ENCODE measurements at regions of chr11 and their contacts with region 1.

Region 1: GRCh38 chr11:74948898-74949747 is at the starts of genes SPCS2 and XRRA1:
- DNase-seq: peak; percentile 98 to 99 (median 99)
- H3K4me3 ChIP-seq: peak within 1 kb of the TSS; percentile 62 to 99 (median 92)
- H3K27ac ChIP-seq: peak within 1 kb of the TSS in 57 of 59 donors; percentile 23 to 91 (median 80)
- H3K27me3 ChIP-seq: no peaks in the 10 kb centered on the region
- CTCF ChIP-seq: peak in 36 of 56 donors; percentile 0 to 59 (median 30)
- total RNA-seq, gene SPCS2: 91.9 to 159 (median 120) TPM
- total RNA-seq, gene XRRA1: 11.0 to 66.2 (median 28.2) TPM

Region 2: DNA sequence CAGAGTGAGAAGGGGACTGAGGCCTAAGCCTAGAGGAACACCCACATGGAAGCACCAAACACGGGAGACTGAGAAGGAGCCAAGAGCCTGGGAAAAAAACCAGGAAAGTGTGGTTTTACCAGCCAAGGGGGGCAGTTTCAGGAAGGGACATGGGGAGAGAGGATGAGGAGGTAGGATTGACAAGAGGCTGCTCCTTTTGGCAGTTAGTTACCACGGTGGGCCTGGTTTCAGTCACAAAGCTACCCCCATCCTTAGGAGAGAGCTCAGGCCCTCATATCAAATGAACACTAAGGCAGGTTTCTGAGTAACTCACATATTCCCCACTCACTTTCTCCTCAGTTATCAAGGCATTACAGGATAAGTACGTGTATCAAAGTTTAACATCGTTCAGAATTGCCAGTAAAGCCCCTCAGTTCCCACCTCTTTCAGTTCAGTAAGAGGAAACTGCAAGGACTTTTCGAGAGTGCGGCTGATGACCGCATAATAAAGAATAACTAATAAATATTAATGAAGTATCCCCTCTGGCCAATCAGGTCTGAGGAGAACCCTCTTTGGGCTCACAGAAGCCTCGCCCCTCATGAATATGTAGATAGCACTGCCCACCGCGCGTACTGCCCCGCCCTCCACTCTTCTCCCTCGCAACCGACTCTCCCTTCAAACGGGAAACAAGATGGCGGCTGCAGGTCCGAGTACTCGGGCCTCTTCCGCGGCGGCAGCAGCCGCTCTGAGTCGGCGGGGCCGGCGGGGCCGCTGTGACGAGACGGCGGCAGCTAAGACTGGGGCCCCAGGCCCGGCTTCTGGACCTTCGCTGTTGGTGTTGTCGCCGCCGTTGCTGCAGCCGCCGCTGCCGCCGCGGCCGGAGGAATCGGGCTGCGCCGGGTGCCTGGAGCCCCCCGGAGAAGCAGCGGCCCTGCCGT is 200.7 kb before region 1 on chr11 and contains the start of gene RNF169:
- intact Hi-C with region 1: loop called in 1 of 2 experiments (anchors 10 kb)
- DNase-seq: peak; percentile 84 to 97 (median 96)
- H3K4me3 ChIP-seq: peak within 1 kb of the TSS; percentile 60 to 94 (median 82)
- H3K27ac ChIP-seq: peak within 1 kb of the TSS; percentile 60 to 99 (median 93)
- H3K27me3 ChIP-seq: no peaks in the 10 kb centered on the region
- CTCF ChIP-seq: peak in 12 of 56 donors; percentile 12 to 27 (median 17)
- total RNA-seq, gene RNF169: 13.4 to 32.9 (median 19.4) TPM

Region 3: DNA sequence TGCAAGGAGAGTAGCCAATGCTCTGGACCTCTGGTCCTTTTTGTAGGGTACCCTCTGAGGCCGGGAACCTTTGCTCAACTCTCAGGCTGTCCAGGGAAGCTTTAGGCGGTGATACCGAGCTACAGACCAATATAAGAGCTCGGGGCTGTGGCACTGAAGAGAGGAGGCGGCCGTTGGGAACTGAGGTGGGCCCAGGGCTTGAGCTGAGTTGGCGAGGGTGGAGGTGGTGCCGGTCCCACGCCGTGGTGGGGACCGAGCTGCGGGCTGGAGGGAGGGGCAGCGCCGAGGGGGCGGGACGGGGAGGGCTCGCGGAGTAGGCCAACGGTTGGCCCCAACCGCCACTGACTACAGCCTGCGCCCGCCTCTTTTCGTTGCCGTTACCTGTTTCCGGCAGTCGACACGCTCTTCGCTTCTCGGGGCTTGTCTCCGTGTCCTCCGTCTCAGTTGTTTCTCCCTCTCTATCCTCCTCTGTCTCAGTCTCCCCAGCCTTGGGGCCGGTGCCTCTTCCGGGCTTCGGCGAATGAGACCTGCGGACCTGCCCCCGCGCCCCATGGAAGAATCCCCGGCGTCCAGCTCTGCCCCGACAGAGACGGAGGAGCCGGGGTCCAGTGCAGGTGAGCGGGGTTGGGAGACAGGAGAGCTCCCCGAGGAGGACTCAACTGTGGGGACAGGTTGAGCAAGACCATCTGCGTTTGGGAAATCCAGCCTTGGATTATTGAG is 39.6 kb after region 1 on chr11 and contains the start of gene NEU3:
- intact Hi-C with region 1: loop called in 1 of 2 experiments (anchors 5 kb)
- DNase-seq: peak; percentile 41 to 81 (median 72)
- H3K4me3 ChIP-seq: peak within 1 kb of the TSS; percentile 57 to 92 (median 81)
- H3K27ac ChIP-seq: peak within 1 kb of the TSS in 45 of 59 donors; percentile 1 to 87 (median 55)
- H3K27me3 ChIP-seq: no peaks in the 10 kb centered on the region
- CTCF ChIP-seq: peak in 5 of 56 donors; percentile 6 to 29 (median 14)
- total RNA-seq, gene NEU3: 11.4 to 30.6 (median 20.7) TPM

Region 4: GRCh38 chr11:75022759-75023396 is 73.8 kb after region 1 on chr11:
- intact Hi-C with region 1: loop called (anchors 5 kb)
- DNase-seq: peak; percentile 78 to 91 (median 87)
- H3K4me3 ChIP-seq: no peak overlapping the region
- H3K27ac ChIP-seq: peak overlapping the region in 58 of 59 donors; percentile 47 to 95 (median 87)
- H3K27me3 ChIP-seq: no peaks in the 10 kb centered on the region
- CTCF ChIP-seq: peak; percentile 93 to 100 (median 99)

Region 5: DNA sequence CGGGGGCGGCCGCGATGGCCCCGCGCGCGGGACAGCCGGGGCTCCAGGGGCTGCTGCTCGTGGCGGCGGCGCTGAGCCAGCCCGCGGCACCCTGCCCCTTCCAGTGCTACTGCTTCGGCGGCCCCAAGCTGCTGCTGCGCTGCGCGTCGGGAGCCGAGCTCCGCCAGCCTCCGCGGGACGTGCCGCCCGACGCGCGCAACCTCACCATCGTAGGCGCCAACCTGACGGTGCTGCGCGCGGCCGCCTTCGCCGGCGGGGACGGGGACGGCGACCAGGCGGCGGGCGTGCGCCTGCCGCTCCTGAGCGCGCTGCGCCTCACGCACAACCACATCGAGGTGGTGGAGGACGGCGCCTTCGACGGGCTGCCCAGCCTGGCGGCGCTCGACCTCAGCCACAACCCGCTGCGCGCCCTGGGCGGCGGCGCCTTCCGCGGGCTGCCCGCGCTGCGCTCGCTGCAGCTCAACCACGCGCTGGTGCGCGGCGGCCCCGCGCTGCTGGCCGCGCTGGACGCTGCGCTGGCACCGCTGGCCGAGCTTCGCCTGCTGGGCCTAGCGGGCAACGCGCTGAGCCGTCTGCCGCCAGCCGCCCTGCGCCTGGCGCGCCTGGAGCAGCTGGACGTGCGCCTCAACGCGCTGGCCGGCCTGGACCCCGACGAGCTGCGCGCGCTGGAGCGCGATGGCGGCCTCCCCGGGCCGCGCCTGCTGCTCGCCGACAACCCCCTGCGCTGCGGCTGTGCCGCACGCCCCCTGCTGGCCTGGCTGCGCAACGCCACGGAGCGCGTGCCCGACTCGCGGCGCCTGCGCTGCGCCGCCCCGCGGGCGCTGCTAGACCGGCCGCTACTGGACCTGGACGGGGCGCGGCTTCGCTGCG is 292.1 kb after region 1 on chr11:
- intact Hi-C with region 1: loop called in 1 of 2 experiments (anchors 5 kb)
- DNase-seq: peak; percentile 45 to 87 (median 66)
- H3K4me3 ChIP-seq: peak overlapping the region; percentile 30 to 72 (median 54)
- H3K27ac ChIP-seq: peak overlapping the region in 24 of 59 donors; percentile 17 to 78 (median 52)
- H3K27me3 ChIP-seq: peaks cover 0 to 17% (median 0%) of the 10 kb centered on the region in 45 donors
- CTCF ChIP-seq: peak in 55 of 56 donors; percentile 19 to 98 (median 78)

Region 6: DNA sequence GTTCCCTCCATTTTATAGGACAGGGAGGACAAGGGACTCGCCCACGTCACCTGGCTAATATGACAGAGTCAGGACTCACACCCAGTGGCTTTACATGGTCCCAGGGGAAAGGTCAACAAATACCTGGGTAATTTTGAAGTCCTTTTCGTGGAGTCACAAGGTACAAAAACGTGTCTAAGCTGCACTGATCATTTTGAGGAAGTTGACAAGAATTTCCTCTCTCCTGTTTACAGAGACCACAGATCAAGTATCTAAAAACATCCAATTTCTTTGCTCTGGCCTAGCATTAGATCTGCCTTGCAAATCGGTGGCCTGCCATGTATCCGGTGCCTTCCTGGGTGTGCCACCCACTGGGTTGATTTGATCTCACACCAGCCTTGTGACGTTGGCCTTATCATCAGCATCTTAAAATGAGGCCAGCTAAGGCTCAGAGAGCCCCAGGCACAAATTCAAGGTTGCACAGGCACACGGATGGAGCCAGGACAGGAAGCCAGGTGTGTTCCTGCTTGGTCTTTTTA is 559.0 kb after region 1 on chr11:
- intact Hi-C with region 1: no loop called
- DNase-seq: no peak
- H3K4me3 ChIP-seq: no peak overlapping the region
- H3K27ac ChIP-seq: peak overlapping the region in 1 of 59 donors; percentile 63
- H3K27me3 ChIP-seq: no peaks in the 10 kb centered on the region
- CTCF ChIP-seq: no peak

Measured in dorsolateral prefrontal cortex (tissue), 120 donors.